A673 (cell line): ENCODE measurements at regions of chr1 and their contacts with region 1.

Region 1: GRCh38 chr1:115275212-115275611 is 62.8 kb downstream of the NGF start:
- DNase-seq: peak; percentile 68
- H3K4me3 ChIP-seq: no peak overlapping the region
- H3K27ac ChIP-seq: no peak overlapping the region
- H3K4me1 ChIP-seq: peaks cover 7% of the 10 kb centered on the region
- H3K27me3 ChIP-seq: no peaks in the 10 kb centered on the region
- CTCF ChIP-seq: peak; percentile 70

Region 2: DNA sequence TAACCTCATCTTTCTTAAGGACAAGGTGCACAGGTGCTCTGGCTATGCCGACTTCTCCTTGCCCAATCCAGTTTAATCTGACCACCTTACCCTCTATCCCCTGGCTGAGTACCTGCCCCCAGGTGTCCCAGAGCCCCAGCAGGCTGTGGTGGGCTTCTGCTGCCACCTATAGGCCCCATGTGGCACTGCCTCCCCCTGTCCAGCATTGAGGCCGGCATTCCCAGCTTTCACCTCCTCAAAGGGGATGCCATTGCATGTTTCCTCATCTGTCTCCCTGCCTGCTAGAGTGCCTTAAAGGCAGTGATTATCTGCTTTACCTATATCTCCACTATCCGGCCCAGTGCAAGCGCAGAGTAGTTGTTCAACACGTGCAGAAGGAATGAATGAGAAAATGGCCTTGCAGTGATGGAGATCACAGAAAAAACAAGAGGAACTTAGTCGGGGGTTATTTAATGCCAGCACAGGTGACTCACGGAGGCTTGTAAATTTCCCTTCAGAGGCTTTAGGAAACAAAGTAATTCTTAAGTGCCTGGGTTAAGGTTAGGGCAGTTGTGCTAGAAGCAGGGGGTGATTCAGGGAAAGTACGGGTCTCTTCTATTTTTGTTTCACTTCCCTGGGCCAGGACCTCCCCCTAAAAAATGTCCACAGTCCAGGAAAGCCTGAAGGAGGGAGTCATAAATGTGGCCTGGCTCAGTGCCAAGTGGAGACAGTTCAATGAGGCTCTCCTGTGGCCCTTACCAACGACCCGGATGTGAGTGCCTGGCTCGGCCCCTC is 194.7 kb after region 1 on chr1:
- CTCF ChIA-PET with region 1: interaction called, 3 read pairs
- POLR2A ChIA-PET with region 1: no interaction called
- intact Hi-C with region 1: loop called (anchors 5 kb)
- DNase-seq: peak; percentile 27
- H3K4me3 ChIP-seq: no peak overlapping the region
- H3K27ac ChIP-seq: no peak overlapping the region
- H3K4me1 ChIP-seq: no peaks in the 10 kb centered on the region
- H3K27me3 ChIP-seq: peaks cover 22% of the 10 kb centered on the region
- CTCF ChIP-seq: peak; percentile 97

Region 3: DNA sequence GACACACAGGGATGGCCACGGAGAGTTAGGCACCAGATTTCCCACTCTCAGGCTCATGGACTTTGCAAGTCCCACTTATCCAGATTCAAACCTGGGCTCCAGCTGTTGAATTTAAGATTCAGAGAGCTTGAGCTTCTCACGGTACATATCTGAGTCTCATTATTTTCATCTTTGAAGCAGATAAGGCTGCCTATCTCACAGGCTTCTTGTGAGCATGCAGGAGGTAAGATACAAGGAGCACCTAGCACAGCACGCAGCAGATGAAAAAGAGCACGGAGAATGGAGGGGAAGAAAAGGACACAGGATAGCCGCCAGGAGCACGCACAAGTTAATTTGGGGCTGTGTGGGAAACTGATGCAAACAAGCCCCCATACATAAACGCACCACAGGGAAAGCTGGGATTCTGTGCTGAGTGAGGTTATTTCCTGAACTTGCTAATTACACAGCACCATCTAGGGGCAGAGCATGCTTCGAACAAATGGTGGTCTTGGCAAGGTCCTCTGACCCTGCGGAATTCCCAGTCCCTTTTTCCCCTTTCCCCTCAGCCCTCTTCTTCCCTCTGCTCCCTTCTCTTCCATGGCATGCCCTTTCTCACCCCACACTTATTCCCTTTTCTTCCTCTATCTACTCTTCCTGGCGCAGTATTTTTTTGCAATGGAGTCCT is 231.8 kb after region 1 on chr1:
- CTCF ChIA-PET with region 1: no interaction called
- POLR2A ChIA-PET with region 1: no interaction called
- intact Hi-C with region 1: loop called (anchors 5 kb)
- DNase-seq: peak; percentile 67
- H3K4me3 ChIP-seq: no peak overlapping the region
- H3K27ac ChIP-seq: no peak overlapping the region
- H3K4me1 ChIP-seq: peaks cover 5% of the 10 kb centered on the region
- H3K27me3 ChIP-seq: peaks cover 5% of the 10 kb centered on the region
- CTCF ChIP-seq: peak; percentile 75